ENCODE measurements at regions of chr3 and their contacts with region 1.

Region 1: DNA sequence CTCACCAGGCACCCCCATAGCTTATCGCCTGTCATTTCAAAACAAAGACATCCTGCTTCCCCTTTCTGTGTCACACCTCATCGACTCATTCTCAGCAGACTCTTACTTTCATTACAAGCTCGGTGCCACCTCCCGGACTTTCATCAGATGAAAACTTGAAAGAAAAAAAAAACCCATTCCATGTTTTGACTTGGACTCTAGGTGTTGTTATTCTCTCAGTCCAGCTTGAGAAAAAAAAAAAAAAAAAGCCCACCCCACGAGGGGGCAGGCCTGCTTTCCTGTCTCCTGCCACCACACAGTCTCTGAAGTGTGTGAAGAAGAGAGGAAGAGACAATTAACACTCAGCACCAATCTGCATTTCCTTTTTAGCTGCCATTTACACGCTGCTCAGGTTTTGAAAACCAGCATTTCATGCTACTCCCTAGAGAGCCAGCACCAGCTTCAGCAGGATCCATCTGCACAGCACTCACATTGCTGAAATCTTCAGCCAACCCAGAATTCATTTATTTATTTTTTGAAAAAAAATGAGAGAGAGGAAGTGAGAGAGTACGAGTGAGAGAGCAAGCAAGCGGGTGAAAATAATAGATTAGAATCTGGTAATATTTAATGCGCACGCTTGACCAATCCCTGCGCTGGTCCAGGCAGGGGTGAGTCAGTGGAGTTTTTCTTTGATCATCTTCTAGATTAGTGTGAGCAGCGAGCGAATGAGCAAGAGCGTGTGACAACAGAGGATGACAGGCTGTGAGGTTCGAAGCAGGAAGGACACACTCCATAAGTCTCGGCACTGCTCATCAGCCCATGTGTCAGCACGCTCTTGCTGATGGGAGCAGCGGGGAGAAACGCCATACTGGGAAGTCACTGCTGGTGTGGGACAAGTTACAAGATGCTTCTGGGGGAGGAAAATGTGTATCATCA is 23.5 kb downstream of the ZNF80 start:
- DNase-seq: peak; percentile 64
- ATAC-seq: peak; percentile 71
- H3K4me3 Mint-ChIP-seq: no peak overlapping the region
- H3K27ac Mint-ChIP-seq: no peak overlapping the region
- H3K4me1 Mint-ChIP-seq: peaks cover 27% of the 10 kb centered on the region
- H3K27me3 Mint-ChIP-seq: no peaks in the 10 kb centered on the region
- CTCF ChIP-seq: no peak

Region 2: GRCh38 chr3:113696658-113697499 is 517.0 kb before region 1 on chr3:
- CTCF ChIA-PET with region 1: no interaction called
- POLR2A ChIA-PET with region 1: interaction called, 7 read pairs
- intact Hi-C with region 1: loop called (anchors 1 kb)
- DNase-seq: peak; percentile 95
- ATAC-seq: peak; percentile 89
- H3K4me3 Mint-ChIP-seq: no peak overlapping the region
- H3K27ac Mint-ChIP-seq: no peak overlapping the region
- H3K4me1 Mint-ChIP-seq: peaks cover 29% of the 10 kb centered on the region
- H3K27me3 Mint-ChIP-seq: no peaks in the 10 kb centered on the region
- CTCF ChIP-seq: no peak

Region 3: DNA sequence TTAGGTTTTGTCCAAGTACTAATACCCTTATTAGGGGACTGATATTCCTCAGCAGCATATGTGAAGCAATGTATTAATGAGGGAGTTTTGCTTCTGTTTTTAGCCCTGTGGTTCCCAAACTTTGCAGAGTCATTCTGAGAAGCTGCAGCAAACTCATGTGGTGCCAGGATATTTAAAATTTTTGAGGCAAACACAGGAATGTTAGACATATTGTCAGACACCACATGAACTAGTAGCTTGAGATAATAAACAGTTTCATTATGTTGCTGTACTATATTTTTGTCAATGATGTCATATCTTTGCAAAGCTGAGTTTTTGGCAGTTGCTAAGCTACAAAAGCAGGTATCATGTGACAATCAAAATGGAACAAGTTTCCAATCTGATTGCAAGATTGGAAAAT is 430.4 kb before region 1 on chr3:
- CTCF ChIA-PET with region 1: no interaction called
- POLR2A ChIA-PET with region 1: no interaction called
- intact Hi-C with region 1: no loop called
- DNase-seq: no peak
- ATAC-seq: peak; percentile 45
- H3K4me3 Mint-ChIP-seq: no peak overlapping the region
- H3K27ac Mint-ChIP-seq: no peak overlapping the region
- H3K4me1 Mint-ChIP-seq: peaks cover 13% of the 10 kb centered on the region
- H3K27me3 Mint-ChIP-seq: no peaks in the 10 kb centered on the region
- CTCF ChIP-seq: no peak

Region 4: DNA sequence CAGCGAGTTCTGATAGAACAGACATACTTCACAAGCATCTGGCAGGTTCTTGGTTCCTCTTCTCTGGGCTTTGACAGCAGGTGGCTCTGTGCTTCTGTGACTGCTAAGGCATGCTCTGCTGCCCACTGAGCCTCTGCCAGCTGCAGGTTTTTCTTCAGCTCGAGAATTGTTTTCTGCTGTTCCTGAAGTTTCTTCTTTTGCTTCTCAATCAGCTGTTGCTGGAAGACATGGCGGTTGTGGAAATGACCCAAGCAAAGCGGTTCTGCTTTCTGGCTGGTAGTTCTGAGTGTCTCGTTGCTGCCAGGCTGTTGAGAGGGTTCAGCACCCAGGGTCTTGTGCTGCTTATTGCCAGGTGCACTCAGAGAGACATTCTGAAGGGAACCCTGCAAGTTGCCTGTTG is 208.4 kb before region 1 on chr3:
- CTCF ChIA-PET with region 1: no interaction called
- POLR2A ChIA-PET with region 1: interaction called, 9 read pairs
- intact Hi-C with region 1: loop called (anchors 2 kb)
- DNase-seq: peak; percentile 52
- ATAC-seq: peak; percentile 95
- H3K4me3 Mint-ChIP-seq: peak overlapping the region; percentile 76
- H3K27ac Mint-ChIP-seq: peak overlapping the region; percentile 97
- H3K4me1 Mint-ChIP-seq: peaks cover 61% of the 10 kb centered on the region
- H3K27me3 Mint-ChIP-seq: no peaks in the 10 kb centered on the region
- CTCF ChIP-seq: no peak

Region 5: DNA sequence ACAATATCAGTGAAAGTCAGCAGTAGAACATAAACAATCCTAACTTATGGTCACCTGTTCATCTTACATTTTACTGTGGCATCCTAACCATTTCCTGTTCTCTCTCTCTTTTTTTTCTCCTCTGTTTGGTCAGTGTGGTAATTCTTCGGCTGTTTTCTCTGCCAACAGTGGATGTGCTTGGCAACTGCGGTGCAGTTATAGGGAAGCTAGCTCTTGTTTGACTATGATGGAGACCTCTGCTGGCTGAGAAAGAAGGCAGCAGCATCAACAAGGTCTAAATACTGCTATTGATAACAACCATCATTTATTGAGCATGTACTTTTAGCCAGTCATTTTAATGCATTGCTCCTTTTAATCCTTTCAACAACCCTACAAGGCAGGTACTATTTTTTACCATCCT is 34.3 kb before region 1 on chr3:
- CTCF ChIA-PET with region 1: interaction called, 7 read pairs
- POLR2A ChIA-PET with region 1: interaction called, 22 read pairs
- intact Hi-C with region 1: loop called (anchors 1 kb)
- DNase-seq: no peak
- ATAC-seq: peak; percentile 50
- H3K4me3 Mint-ChIP-seq: no peak overlapping the region
- H3K27ac Mint-ChIP-seq: no peak overlapping the region
- H3K4me1 Mint-ChIP-seq: peaks cover 3% of the 10 kb centered on the region
- H3K27me3 Mint-ChIP-seq: peaks cover 9% of the 10 kb centered on the region
- CTCF ChIP-seq: no peak

Region 6: DNA sequence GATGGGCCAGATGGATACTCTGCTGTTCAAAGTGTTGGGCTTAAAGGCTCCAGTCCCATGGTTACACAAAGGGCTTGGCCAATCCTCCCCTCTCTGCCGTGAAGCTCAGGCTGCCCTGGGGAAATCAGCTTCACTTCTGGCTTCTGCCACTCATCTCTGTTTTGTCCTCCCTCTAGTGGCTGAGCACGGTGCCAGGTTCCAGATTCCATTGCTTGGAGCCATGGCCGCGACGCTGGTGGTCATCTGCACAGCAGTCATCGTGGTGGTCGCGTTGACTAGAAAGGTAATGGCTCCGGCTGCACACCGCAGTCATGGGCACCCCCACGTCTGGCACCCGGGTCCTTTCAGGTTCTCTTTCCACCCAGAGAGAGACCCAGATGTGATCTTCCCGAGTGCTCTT is 85.5 kb after region 1 on chr3:
- CTCF ChIA-PET with region 1: interaction called, 13 read pairs
- POLR2A ChIA-PET with region 1: interaction called, 334 read pairs
- intact Hi-C with region 1: no loop called
- DNase-seq: no peak
- ATAC-seq: peak; percentile 44
- H3K4me3 Mint-ChIP-seq: no peak overlapping the region
- H3K27ac Mint-ChIP-seq: peak overlapping the region; percentile 37
- H3K4me1 Mint-ChIP-seq: peaks cover 28% of the 10 kb centered on the region
- H3K27me3 Mint-ChIP-seq: no peaks in the 10 kb centered on the region
- CTCF ChIP-seq: no peak

Region 7: GRCh38 chr3:114336122-114336697 is 122.3 kb after region 1 on chr3:
- CTCF ChIA-PET with region 1: interaction called, 4 read pairs
- POLR2A ChIA-PET with region 1: interaction called, 17 read pairs
- intact Hi-C with region 1: loop called (anchors 1 kb)
- DNase-seq: no peak
- ATAC-seq: no peak
- H3K4me3 Mint-ChIP-seq: no peak overlapping the region
- H3K27ac Mint-ChIP-seq: peak overlapping the region; percentile 59
- H3K4me1 Mint-ChIP-seq: peaks cover 43% of the 10 kb centered on the region
- H3K27me3 Mint-ChIP-seq: no peaks in the 10 kb centered on the region
- CTCF ChIP-seq: no peak

Region 8: GRCh38 chr3:114454551-114455251 is 240.8 kb after region 1 on chr3:
- CTCF ChIA-PET with region 1: no interaction called
- POLR2A ChIA-PET with region 1: interaction called, 32 read pairs
- intact Hi-C with region 1: loop called (anchors 2 kb)
- DNase-seq: no peak
- ATAC-seq: peak; percentile 43
- H3K4me3 Mint-ChIP-seq: no peak overlapping the region
- H3K27ac Mint-ChIP-seq: no peak overlapping the region
- H3K4me1 Mint-ChIP-seq: peaks cover 52% of the 10 kb centered on the region
- H3K27me3 Mint-ChIP-seq: no peaks in the 10 kb centered on the region
- CTCF ChIP-seq: no peak

Region 9: DNA sequence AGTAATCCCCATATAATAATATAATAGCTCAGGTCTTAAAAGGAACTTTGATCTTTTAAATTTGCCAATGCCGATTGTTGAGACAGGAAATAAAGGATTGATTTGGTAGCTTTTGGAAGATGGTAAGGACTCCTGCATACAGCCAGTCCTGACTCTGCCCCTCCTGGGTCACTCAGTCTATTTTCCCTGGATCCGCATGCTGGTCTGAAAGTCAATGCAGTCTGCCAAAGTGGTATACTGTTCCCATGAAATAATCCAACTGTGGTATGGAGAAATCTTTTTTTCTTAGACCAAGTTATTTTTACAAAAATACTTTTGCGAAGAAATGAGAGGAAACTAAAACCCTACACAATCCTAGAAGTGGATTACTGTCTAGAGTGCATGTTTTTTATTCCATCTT is 271.0 kb after region 1 on chr3:
- CTCF ChIA-PET with region 1: no interaction called
- POLR2A ChIA-PET with region 1: no interaction called
- intact Hi-C with region 1: no loop called
- DNase-seq: no peak
- ATAC-seq: no peak
- H3K4me3 Mint-ChIP-seq: no peak overlapping the region
- H3K27ac Mint-ChIP-seq: no peak overlapping the region
- H3K4me1 Mint-ChIP-seq: peaks cover 10% of the 10 kb centered on the region
- H3K27me3 Mint-ChIP-seq: no peaks in the 10 kb centered on the region
- CTCF ChIP-seq: no peak